Spleen (tissue), 13 donors: ENCODE measurements at regions of chr1 and their contacts with region 1.

Region 1: DNA sequence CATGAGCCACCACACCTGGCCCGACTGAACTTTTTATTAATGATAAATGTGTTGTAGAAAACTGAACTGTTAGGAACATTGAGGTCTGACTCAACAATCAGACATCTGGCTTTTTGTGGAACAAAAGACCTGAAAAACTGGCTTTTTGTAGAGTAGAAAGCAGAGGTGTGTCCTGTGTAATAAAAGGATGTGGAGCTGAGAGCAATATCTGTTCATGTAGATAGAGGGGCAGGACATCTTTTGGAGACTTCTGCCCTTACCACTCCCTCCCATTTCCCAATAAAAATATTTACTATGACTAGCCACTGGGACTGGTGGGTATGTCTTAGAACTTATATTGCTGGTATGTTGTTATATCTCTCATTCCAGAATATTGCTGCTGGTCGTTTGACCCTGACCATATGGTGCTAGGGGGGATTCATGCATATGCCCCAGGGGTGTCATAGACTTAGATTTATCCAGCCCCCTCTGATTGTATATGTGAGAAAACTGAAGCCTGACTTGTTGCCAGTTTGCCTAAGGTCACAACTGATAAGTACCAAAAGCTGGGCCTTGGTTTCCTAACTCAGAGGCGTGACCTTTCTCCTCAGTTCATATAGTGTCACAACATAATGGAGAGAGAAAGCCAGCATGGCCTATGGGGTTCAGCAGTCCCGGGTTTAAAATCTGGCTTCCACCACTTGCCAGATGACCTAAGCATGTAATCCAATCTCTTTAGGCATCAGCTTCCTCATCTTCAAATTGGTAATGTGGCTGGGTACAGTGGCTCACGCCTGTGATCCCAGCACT is 33.5 kb upstream of the PIGV start:
- DNase-seq: no peak
- H3K4me3 ChIP-seq: no peak overlapping the region
- H3K27ac ChIP-seq: peak overlapping the region in 3 of 8 donors; percentile 21 to 61 (median 42)
- H3K4me1 ChIP-seq: peaks cover 14 to 95% (median 55%) of the 10 kb centered on the region in 6 donors
- H3K27me3 ChIP-seq: no peaks in the 10 kb centered on the region
- CTCF ChIP-seq: no peak
- POLR2A ChIP-seq: no peak

Region 2: GRCh38 chr1:26717017-26717491 is 37.2 kb before region 1 on chr1:
- intact Hi-C with region 1: loop called (anchors 5 kb)
- DNase-seq: no peak
- H3K4me3 ChIP-seq: no peak overlapping the region
- H3K27ac ChIP-seq: peak overlapping the region in 3 of 8 donors; percentile 18 to 57 (median 56)
- H3K4me1 ChIP-seq: peaks cover 49 to 100% (median 98%) of the 10 kb centered on the region in 6 donors
- H3K27me3 ChIP-seq: no peaks in the 10 kb centered on the region
- CTCF ChIP-seq: no peak
- POLR2A ChIP-seq: no peak